H1 (cell line): ENCODE measurements at regions of chr2 and their contacts with region 1.

Region 1: GRCh38 chr2:74715078-74715791 is 61.2 kb downstream of the SEMA4F start:
- DNase-seq: peak; percentile 53 to 97
- H3K4me3 ChIP-seq: peak overlapping the region; percentile 40 to 67 (median 56)
- H3K27ac ChIP-seq: no peak overlapping the region
- H3K4me1 ChIP-seq: peaks cover 0 to 4% (median 4%) of the 10 kb centered on the region in 4 experiments; a peak in 4 of 7 replicates
- H3K27me3 ChIP-seq: peaks cover 0 to 11% (median 11%) of the 10 kb centered on the region in 4 experiments; a peak in 6 of 7 replicates
- CTCF ChIP-seq: peak; percentile 88 to 98 (median 89)
- EP300 ChIP-seq: no peak
- POLR2A ChIP-seq: no peak
- RAD21 ChIP-seq: peak; percentile 82 to 85

Region 2: GRCh38 chr2:74690571-74690970 is 24.7 kb before region 1 on chr2:
- CTCF ChIA-PET with region 1: interaction called, 18 read pairs
- POLR2A ChIA-PET with region 1: no interaction called
- DNase-seq: no peak
- H3K4me3 ChIP-seq: no peak overlapping the region
- H3K27ac ChIP-seq: no peak overlapping the region
- H3K4me1 ChIP-seq: no peaks in the 10 kb centered on the region
- H3K27me3 ChIP-seq: no peaks in the 10 kb centered on the region
- CTCF ChIP-seq: peak in 2 of 3 experiments; percentile 76 to 82; a peak in 3 of 4 replicates
- EP300 ChIP-seq: no peak
- POLR2A ChIP-seq: no peak
- RAD21 ChIP-seq: peak; percentile 97 to 98

Region 3: GRCh38 chr2:74696829-74697228 is 18.4 kb before region 1 on chr2:
- CTCF ChIA-PET with region 1: interaction called, 64 read pairs
- POLR2A ChIA-PET with region 1: no interaction called
- DNase-seq: no peak
- H3K4me3 ChIP-seq: no peak overlapping the region
- H3K27ac ChIP-seq: no peak overlapping the region
- H3K4me1 ChIP-seq: no peaks in the 10 kb centered on the region; a peak in 2 of 7 replicates
- H3K27me3 ChIP-seq: no peaks in the 10 kb centered on the region
- CTCF ChIP-seq: no peak
- EP300 ChIP-seq: no peak
- POLR2A ChIP-seq: no peak
- RAD21 ChIP-seq: no peak

Region 4: GRCh38 chr2:74725287-74725686 is 10.1 kb after region 1 on chr2:
- CTCF ChIA-PET with region 1: interaction called, 43 read pairs
- POLR2A ChIA-PET with region 1: no interaction called
- DNase-seq: no peak
- H3K4me3 ChIP-seq: no peak overlapping the region
- H3K27ac ChIP-seq: no peak overlapping the region
- H3K4me1 ChIP-seq: no peaks in the 10 kb centered on the region
- H3K27me3 ChIP-seq: no peaks in the 10 kb centered on the region
- CTCF ChIP-seq: no peak
- EP300 ChIP-seq: no peak
- POLR2A ChIP-seq: no peak
- RAD21 ChIP-seq: no peak

Region 5: DNA sequence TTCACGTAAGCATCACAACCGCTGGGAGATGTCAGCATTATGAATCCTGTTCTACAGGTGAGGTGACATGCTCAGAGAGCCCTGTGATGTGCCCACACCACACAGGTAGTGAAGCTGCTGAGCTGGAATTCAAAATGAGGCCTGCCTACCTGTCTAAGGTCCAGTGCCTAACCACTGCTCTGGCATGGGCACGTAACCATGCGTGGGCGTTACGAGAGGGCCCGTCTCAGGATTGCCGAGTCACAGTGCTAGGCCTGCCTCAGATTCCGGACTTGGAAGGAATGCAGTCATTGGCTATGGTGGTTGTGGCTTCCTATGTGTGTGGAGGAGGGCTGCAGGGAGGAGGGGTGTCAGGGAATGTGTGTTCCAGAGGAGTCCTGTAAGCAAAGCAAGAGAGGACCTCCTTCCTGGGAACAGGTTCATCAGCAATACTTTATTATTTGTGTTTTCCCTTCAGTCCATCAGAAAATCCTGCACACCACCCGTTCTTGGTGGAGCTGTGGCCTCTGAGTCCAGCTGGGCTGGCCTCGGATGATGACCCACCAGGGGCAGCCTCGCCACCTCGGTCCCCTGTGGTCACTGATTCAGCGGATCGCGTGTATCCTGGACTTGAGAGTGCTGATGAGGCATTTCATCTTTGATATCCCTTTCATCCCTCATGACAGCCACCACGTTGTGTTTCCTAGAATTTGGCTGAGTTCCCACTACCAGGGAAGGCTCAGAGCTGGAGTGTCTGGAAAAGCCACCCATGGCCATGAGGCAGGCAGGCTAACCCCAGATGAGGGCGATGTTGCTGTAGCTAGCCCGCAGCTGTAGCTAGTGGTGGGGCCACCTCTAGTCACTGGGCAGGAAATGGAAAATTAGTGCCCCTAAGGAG is 149.8 kb after region 1 on chr2:
- CTCF ChIA-PET with region 1: interaction called, 10 read pairs
- POLR2A ChIA-PET with region 1: no interaction called
- DNase-seq: no peak
- H3K4me3 ChIP-seq: no peak overlapping the region
- H3K27ac ChIP-seq: peak overlapping the region; percentile 52; the same call in 1 of the 2 replicates
- H3K4me1 ChIP-seq: peaks cover 0 to 11% (median 7%) of the 10 kb centered on the region in 4 experiments
- H3K27me3 ChIP-seq: no peaks in the 10 kb centered on the region
- CTCF ChIP-seq: peak in 2 of 3 experiments; percentile 3 to 48; a peak in 1 of 4 replicates
- EP300 ChIP-seq: no peak
- POLR2A ChIP-seq: no peak
- RAD21 ChIP-seq: peak in 1 of 2 experiments; percentile 23; a peak in 3 of 4 replicates